ENCODE measurements at regions of chr1 and their contacts with region 1.

Region 1: DNA sequence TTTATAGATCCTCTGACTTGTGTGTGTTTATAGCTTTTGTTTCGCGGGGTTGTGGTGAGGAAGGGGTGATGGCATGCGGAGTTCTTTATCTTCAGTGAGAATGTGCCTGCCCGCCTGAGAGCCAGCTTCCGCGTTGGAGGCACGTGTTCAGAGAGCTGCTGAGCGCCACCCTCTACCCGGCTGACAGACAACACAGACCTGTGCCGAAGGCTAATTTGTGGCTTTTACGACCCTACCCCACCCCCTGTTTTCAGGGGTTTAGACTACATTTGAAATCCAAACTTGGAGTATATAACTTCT is 14.4 kb upstream of the CD101 start:
- DNase-seq: peak; percentile 71
- H3K4me3 Mint-ChIP-seq: peak overlapping the region; percentile 63
- H3K27ac Mint-ChIP-seq: peak overlapping the region; percentile 51
- H3K4me1 Mint-ChIP-seq: peaks cover 29% of the 10 kb centered on the region
- H3K27me3 Mint-ChIP-seq: peaks cover 2% of the 10 kb centered on the region

Region 2: GRCh38 chr1:117001254-117001927 is 14.2 kb after region 1 on chr1 and contains the start of gene CD101:
- CTCF ChIA-PET with region 1: interaction called, 3 read pairs
- POLR2A ChIA-PET with region 1: interaction called, 19 read pairs
- DNase-seq: peak; percentile 21
- H3K4me3 Mint-ChIP-seq: peak within 1 kb of the TSS; percentile 5
- H3K27ac Mint-ChIP-seq: peak within 1 kb of the TSS; percentile 84
- H3K4me1 Mint-ChIP-seq: peaks cover 30% of the 10 kb centered on the region
- H3K27me3 Mint-ChIP-seq: peaks cover 14% of the 10 kb centered on the region
- total RNA-seq, gene CD101: 2.9 to 3.6 TPM

Measured in activated CD4-positive, alpha-beta memory T cell treated with anti-CD3 and anti-CD28 coated beads, Interleukin-2, amount 10 ng/mL, durations not matched to agents 7 days and 5 days (primary cell).